PC-3 (cell line): ENCODE measurements at regions of chr5 and their contacts with region 1.

Region 1: GRCh38 chr5:180291943-180292831 is at the start of gene MAPK9:
- DNase-seq: peak; percentile 79
- ATAC-seq: peak; percentile 82
- H3K4me3 ChIP-seq: peak within 1 kb of the TSS; percentile 87
- H3K27ac ChIP-seq: peak within 1 kb of the TSS; percentile 50
- H3K4me1 ChIP-seq: peaks cover 29% of the 10 kb centered on the region
- H3K27me3 ChIP-seq: no peaks in the 10 kb centered on the region
- CTCF ChIP-seq: no peak
- total RNA-seq, gene MAPK9: 26.5 and 35.9 TPM in 2 replicates

Region 2: DNA sequence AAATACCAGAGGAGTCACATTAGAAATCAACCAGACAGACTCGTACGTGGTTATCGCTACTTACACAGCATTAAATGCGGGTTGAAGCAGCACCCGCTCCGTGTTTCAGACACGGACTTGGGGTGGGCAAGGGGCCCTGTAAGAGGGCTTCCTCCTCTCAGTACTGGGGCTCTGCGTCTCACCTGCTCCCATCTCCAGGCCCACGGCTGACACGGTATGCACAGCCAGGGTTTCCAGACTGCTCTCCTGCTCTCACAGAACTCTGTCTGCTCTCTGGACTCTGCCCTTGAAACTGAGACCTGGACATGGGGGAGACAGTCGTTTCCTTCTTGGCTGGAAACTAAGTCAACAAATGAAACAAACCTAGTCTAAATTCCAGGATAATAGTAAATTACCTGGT is 58.5 kb before region 1 on chr5:
- CTCF ChIA-PET with region 1: no interaction called
- POLR2A ChIA-PET with region 1: no interaction called
- intact Hi-C with region 1: no loop called
- DNase-seq: no peak
- ATAC-seq: no peak
- H3K4me3 ChIP-seq: no peak overlapping the region
- H3K27ac ChIP-seq: peak overlapping the region; percentile 94
- H3K4me1 ChIP-seq: peaks cover 12% of the 10 kb centered on the region
- H3K27me3 ChIP-seq: no peaks in the 10 kb centered on the region
- CTCF ChIP-seq: no peak

Region 3: GRCh38 chr5:180315762-180316212 is 23.6 kb after region 1 on chr5:
- CTCF ChIA-PET with region 1: interaction called, 6 read pairs
- POLR2A ChIA-PET with region 1: no interaction called
- intact Hi-C with region 1: loop called (anchors 1 kb)
- DNase-seq: peak; percentile 66
- ATAC-seq: 0 out of 2 replicates have a peak, but pooled peaks have one; percentile 5
- H3K4me3 ChIP-seq: no peak overlapping the region
- H3K27ac ChIP-seq: no peak overlapping the region
- H3K4me1 ChIP-seq: 0 out of 2 replicates have a peak, but pooled peaks cover 5% of the 10 kb centered on the region
- H3K27me3 ChIP-seq: no peaks in the 10 kb centered on the region
- CTCF ChIP-seq: peak; percentile 87

Region 4: GRCh38 chr5:180328296-180329137 is 36.3 kb after region 1 on chr5:
- CTCF ChIA-PET with region 1: interaction called, 7 read pairs
- POLR2A ChIA-PET with region 1: no interaction called
- intact Hi-C with region 1: loop called (anchors 2 kb)
- DNase-seq: peak; percentile 85
- ATAC-seq: peak; percentile 41
- H3K4me3 ChIP-seq: no peak overlapping the region
- H3K27ac ChIP-seq: no peak overlapping the region
- H3K4me1 ChIP-seq: peaks cover 34% of the 10 kb centered on the region
- H3K27me3 ChIP-seq: no peaks in the 10 kb centered on the region
- CTCF ChIP-seq: peak; percentile 76

Region 5: DNA sequence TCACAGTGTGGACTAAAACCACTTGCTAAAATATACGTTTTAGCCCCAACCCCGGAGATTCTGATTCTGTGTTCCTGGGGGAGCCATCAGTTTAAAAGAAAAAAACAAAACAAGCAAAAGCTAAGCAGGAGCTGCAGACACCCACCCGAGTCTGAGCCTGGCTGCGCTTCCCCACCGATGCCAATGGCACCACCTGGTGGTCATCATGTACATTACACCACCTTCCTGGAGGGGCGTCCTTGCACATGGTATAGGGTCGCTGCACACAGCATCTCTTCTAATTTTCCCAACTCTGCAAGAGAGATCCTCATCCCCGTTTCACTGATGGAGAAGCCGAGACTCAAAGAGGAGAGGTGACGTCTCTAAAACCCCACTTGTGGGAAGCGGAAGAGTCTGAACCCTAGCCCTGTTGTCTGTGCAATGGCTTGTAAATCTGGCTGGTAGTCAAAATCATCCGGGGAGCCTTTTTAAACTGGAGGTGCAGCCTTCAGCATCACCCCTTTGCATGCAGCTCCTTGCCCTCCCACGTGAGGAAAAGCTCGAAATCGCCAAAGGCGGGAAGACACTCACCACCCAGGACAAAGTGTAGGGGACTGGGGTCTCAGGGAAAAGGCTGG is 178.9 kb after region 1 on chr5:
- CTCF ChIA-PET with region 1: interaction called, 4 read pairs
- POLR2A ChIA-PET with region 1: no interaction called
- intact Hi-C with region 1: loop called (anchors 2 kb)
- DNase-seq: peak; percentile 61
- ATAC-seq: peak; percentile 34; the same call in 1 of the 2 replicates
- H3K4me3 ChIP-seq: no peak overlapping the region
- H3K27ac ChIP-seq: no peak overlapping the region
- H3K4me1 ChIP-seq: peaks cover 6% of the 10 kb centered on the region; the same call in 1 of the 2 replicates
- H3K27me3 ChIP-seq: no peaks in the 10 kb centered on the region
- CTCF ChIP-seq: peak; percentile 85

Region 6: DNA sequence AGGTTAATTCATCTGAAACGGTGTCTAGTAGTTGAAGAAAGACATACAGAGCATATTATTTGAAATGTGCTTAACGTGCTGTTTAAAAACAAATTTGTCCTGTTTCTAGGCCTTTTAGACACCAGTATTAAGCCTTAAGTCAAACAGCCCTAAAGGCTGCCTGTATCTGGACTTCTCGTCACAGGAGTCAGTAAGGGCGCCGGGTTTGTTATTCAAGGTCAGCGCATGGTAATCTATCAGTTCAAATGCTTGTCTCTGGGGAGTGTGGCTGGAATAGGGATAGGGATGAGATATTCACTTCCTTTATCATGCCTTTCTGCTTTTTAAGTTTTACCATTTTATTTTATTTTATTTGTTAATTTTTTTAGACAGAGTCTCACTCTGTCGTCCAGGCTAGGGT is 192.6 kb after region 1 on chr5:
- CTCF ChIA-PET with region 1: interaction called, 10 read pairs
- POLR2A ChIA-PET with region 1: no interaction called
- intact Hi-C with region 1: no loop called
- DNase-seq: no peak
- ATAC-seq: no peak
- H3K4me3 ChIP-seq: no peak overlapping the region
- H3K27ac ChIP-seq: no peak overlapping the region
- H3K4me1 ChIP-seq: no peaks in the 10 kb centered on the region
- H3K27me3 ChIP-seq: no peaks in the 10 kb centered on the region
- CTCF ChIP-seq: no peak

Region 7: GRCh38 chr5:180605554-180606214 is 313.5 kb after region 1 on chr5:
- CTCF ChIA-PET with region 1: no interaction called
- POLR2A ChIA-PET with region 1: no interaction called
- intact Hi-C with region 1: loop called (anchors 5 kb)
- DNase-seq: peak; percentile 62
- ATAC-seq: peak; percentile 74
- H3K4me3 ChIP-seq: no peak overlapping the region
- H3K27ac ChIP-seq: no peak overlapping the region
- H3K4me1 ChIP-seq: no peaks in the 10 kb centered on the region
- H3K27me3 ChIP-seq: no peaks in the 10 kb centered on the region
- CTCF ChIP-seq: peak; percentile 79